ENCODE measurements at regions of chr18 and their contacts with region 1.

Region 1: DNA sequence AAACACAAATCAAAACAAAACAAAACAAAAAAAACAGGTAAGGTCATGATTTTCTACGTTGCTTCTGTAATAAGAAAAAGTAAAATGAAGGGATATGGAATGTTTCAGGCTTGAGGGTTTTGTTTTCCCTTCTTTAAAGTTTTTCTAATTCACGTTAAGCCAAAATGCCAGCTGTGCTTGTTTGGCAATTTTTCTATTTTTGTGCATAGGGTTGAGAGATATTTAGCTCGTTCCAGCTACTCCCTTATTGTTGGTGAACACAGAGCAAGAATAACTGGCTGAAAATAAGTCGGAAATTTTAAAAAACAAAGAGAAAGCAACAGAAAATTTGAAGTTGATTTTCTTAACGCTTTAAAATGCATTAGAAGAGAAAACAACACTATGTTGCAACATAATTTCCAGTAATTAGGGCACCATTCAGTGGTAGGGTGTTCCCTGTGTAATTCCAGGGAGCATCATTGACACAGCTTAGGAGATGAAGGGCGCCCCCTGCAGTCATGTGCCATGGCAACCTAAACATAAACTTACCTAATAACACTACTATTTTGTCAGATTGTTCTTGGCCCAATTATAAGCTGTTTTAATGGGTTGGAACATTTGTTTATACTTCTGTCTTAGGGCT is 99.5 kb downstream of the DTNA start:
- H3K4me3 ChIP-seq: no peak overlapping the region
- H3K27ac ChIP-seq: no peak overlapping the region
- H3K4me1 ChIP-seq: no peaks in the 10 kb centered on the region
- CTCF ChIP-seq: 0 out of 2 replicates have a peak, but pooled peaks have one; percentile 9

Region 2: DNA sequence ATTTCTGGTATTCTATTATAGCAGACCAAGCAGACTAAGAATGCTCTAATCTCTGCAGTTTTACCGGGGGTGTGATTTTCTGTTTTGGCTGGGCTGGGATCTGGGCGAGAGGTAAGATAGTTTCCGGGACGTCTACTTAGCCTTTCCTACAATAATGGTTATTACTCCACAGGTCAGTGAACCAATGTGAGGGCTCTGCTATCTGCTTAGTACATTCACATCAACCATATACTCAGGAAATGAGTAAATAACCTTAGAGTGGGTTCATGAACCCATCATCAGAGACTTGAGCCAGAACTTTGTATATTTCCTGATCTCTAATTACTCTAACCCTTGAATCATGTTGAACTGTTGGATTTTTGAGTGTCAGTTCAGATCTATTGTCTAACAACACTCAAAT is 494.7 kb before region 1 on chr18:
- CTCF ChIA-PET with region 1: interaction called, 10 read pairs
- POLR2A ChIA-PET with region 1: no interaction called
- H3K4me3 ChIP-seq: no peak overlapping the region
- H3K27ac ChIP-seq: no peak overlapping the region
- H3K4me1 ChIP-seq: no peaks in the 10 kb centered on the region
- CTCF ChIP-seq: no peak

Region 3: GRCh38 chr18:34787931-34788532 is 21.5 kb before region 1 on chr18:
- CTCF ChIA-PET with region 1: interaction called, 10 read pairs
- POLR2A ChIA-PET with region 1: no interaction called
- H3K4me3 ChIP-seq: no peak overlapping the region
- H3K27ac ChIP-seq: no peak overlapping the region
- H3K4me1 ChIP-seq: no peaks in the 10 kb centered on the region
- CTCF ChIP-seq: peak; percentile 57

Region 4: GRCh38 chr18:34821749-34822148 is 12.2 kb after region 1 on chr18:
- CTCF ChIA-PET with region 1: interaction called, 15 read pairs
- POLR2A ChIA-PET with region 1: no interaction called
- H3K4me3 ChIP-seq: no peak overlapping the region
- H3K27ac ChIP-seq: no peak overlapping the region
- H3K4me1 ChIP-seq: no peaks in the 10 kb centered on the region
- CTCF ChIP-seq: no peak

Region 5: GRCh38 chr18:34957119-34957863 is 147.7 kb after region 1 on chr18:
- CTCF ChIA-PET with region 1: no interaction called
- POLR2A ChIA-PET with region 1: no interaction called
- H3K4me3 ChIP-seq: no peak overlapping the region
- H3K27ac ChIP-seq: no peak overlapping the region
- H3K4me1 ChIP-seq: no peaks in the 10 kb centered on the region
- CTCF ChIP-seq: no peak